Heart left ventricle (tissue), 16 donors: ENCODE measurements at regions of chr15 and their contacts with region 1.

Region 1: DNA sequence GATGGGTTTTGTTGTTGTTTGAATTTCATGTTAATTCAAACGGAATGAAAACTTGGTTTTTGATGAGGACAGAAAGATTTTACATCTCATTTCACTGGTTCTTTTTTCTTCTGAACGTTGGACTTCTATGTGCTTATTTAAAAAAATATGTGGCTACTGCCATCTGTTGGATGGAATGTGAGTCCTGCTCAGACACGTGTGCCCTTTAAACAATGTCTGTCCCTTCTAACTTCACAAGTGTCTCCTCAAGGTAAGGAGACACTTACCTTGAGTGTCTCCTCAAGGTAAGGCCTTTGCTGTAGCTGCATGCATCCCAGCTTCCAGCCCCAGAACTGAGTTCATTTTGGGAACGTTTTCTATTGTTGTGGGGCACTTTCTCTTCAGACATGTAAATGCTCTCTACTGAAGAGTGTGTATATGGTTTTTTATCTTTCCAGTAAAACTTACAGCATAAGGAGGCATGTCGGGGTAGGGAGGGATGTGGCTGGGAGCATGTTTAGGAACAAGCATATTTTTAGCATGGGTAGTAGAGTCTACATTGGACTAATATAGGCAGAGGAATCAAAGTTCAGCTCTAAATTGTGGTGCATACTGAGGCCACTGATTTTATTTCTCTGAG is 63.1 kb upstream of the UBE3A start:
- DNase-seq: no peak
- ATAC-seq: peak in 2 of 4 donors; percentile 41 to 50
- H3K4me3 ChIP-seq: no peak overlapping the region
- H3K27ac ChIP-seq: no peak overlapping the region
- H3K4me1 ChIP-seq: peaks cover 0 to 2% (median 0%) of the 10 kb centered on the region in 12 donors
- H3K27me3 ChIP-seq: no peaks in the 10 kb centered on the region
- CTCF ChIP-seq: peak; percentile 45 to 76 (median 68)
- POLR2A ChIP-seq: no peak

Region 2: GRCh38 chr15:24761704-24762302 is 740.1 kb before region 1 on chr15:
- intact Hi-C with region 1: loop called in 5 of 10 experiments (anchors 5 to 10 kb)
- DNase-seq: no peak
- ATAC-seq: no peak
- H3K4me3 ChIP-seq: no peak overlapping the region
- H3K27ac ChIP-seq: no peak overlapping the region
- H3K4me1 ChIP-seq: no peaks in the 10 kb centered on the region
- H3K27me3 ChIP-seq: peaks cover 0 to 6% (median 0%) of the 10 kb centered on the region in 9 donors
- CTCF ChIP-seq: peak in 11 of 12 donors; percentile 21 to 61 (median 41)
- POLR2A ChIP-seq: no peak

Region 3: GRCh38 chr15:25136119-25136518 is 365.8 kb before region 1 on chr15:
- intact Hi-C with region 1: loop called in 2 of 10 experiments (anchors 10 kb)
- DNase-seq: no peak
- ATAC-seq: peak in 3 of 4 donors; percentile 57 to 71 (median 70)
- H3K4me3 ChIP-seq: no peak overlapping the region
- H3K27ac ChIP-seq: no peak overlapping the region
- H3K4me1 ChIP-seq: peaks cover 0 to 8% (median 0%) of the 10 kb centered on the region in 12 donors
- H3K27me3 ChIP-seq: no peaks in the 10 kb centered on the region
- CTCF ChIP-seq: peak in 11 of 12 donors; percentile 11 to 44 (median 30)
- POLR2A ChIP-seq: no peak